ENCODE measurements at regions of chr19 and their contacts with region 1.

Region 1: DNA sequence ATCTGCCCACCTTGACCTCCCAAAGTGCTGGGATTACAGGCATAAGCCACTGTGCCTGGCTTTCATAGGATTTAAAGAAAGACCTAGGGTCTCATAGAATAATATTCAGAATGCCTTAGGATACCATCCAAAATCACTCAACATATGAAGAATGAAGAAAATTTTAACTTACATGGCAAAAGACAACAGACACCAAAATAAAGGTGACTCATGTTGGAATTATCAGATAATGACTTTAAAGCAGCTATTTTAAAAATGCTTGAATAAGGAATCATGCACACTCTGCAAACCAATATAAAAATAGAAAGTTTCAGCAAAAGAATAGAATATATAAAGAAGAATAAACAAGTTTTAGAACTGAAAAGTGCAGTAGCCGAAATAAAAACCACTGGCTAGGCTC is 29.3 kb downstream of the ZNF566 start:
- DNase-seq: no peak
- ATAC-seq: no peak

Region 2: GRCh38 chr19:36401475-36401874 is 58.6 kb before region 1 on chr19:
- intact Hi-C with region 1: loop called in 1 of 2 experiments (anchors 10 kb)
- DNase-seq: no peak
- ATAC-seq: no peak

Region 3: DNA sequence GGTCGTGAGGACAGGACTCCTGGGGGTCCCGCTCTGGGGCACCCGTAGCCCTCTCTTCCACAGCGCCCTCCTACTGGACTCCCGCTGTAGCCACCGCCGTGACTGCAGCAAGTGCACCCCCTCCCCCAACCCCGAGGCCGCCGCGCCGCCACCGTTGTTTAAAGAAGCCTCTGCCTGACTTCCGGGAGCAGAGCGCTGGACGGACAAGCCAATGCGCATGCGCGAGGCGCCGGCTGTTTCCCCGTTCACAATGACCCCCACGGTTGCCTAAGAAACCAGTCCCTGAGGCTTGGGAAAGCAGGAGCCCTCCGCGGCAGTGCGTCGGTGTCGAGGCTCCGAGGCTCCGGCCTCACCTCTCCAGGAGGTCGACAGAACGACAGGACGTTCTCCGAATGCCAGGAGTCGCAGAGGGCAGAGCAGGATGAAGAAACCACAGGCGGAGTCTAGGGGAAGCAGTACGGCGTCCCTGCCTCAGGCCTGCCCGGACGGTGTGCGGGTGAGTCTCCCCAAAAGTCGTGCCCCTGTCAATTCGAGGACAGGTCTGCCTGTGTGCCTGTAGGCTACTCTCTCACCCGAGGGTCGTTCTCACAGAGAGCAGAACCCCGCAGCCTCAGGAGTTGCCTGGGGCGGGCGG is 547.7 kb after region 1 on chr19:
- intact Hi-C with region 1: no loop called
- DNase-seq: peak; percentile 84
- ATAC-seq: peak; percentile 90 to 91

Measured in left cardiac atrium (tissue), 4 donors.